HAP-1 (cell line): ENCODE measurements at regions of chr1 and their contacts with region 1.

Region 1: GRCh38 chr1:45569962-45570581 is 13.8 kb upstream of the NASP start:
- DNase-seq: peak; percentile 66 to 74
- H3K4me3 ChIP-seq: no peak overlapping the region
- H3K4me1 ChIP-seq: peaks cover 3% of the 10 kb centered on the region; the same call in 1 of the 2 replicates
- H3K27me3 ChIP-seq: no peaks in the 10 kb centered on the region

Region 2: DNA sequence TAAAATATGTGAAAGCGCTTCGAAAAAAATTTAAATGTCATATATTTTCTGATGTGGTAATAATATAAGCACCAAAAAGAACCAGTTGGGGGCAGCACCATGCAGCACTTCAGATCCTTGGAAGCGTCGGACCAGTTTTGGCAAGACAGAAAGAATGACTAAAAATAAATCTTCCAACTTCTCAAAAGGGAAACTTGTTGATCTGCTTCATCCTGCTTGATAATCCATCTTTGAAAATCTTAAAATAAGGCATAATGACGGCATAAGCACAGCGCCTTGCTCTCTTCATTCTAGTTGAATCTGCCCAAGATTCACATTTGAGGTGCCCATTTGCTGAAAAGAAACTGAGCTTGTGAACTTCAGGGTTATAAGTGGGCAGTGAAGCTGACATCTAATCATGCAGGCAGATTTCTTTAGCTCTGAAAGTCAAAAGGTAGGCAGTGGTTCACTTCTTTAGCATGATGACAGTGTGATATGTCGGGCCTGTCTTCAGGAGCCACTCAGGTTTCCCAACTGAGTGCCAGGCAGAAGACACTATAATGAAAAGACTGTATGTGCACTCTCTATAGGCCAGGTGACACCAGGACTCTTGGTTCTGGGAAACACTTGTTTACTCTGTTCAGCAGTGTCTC is 210.1 kb before region 1 on chr1:
- in situ Hi-C with region 1: loop called (anchors 10 kb)
- DNase-seq: peak; percentile 65 to 72
- H3K4me3 ChIP-seq: no peak overlapping the region
- H3K4me1 ChIP-seq: peaks cover 17% of the 10 kb centered on the region
- H3K27me3 ChIP-seq: no peaks in the 10 kb centered on the region

Region 3: GRCh38 chr1:45508295-45509151 is 61.5 kb before region 1 on chr1:
- in situ Hi-C with region 1: loop called (anchors 5 kb)
- DNase-seq: no peak
- H3K4me3 ChIP-seq: no peak overlapping the region
- H3K4me1 ChIP-seq: no peaks in the 10 kb centered on the region
- H3K27me3 ChIP-seq: no peaks in the 10 kb centered on the region

Region 4: DNA sequence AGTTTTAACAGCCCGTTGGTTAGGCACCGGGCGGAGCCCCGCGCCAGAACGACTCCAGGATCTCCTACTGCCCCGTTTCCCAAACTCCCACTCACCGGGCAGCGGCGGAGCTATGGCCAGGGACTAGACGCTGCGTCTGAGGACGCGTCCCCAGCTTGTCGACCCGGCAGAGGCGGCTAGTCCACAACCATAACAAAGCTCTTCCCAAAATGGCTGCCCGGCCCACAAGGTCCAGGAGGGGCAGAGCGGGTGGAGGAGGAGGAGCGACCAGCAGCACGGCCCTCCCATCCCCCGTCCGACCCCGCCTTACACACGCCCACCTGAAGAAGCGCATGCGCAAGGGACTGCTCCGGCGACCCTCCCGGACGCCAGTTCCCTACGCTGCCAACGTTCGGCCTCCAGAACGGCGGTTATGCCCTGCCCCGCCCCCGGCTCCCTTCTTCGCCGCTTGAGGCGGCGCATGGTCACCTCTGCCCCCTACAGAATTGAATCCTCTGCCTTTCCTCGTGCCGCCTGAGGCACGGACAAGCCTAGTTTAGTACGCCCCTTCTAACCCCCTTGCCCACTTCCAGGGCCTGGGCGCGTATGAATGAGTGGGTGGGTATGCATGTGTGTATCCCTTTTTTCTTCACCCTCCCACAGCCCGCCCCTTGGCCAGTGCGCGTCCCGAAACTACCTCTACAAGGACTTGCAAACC is 116.4 kb after region 1 on chr1 and contains the start of gene GPBP1L1:
- in situ Hi-C with region 1: no loop called
- DNase-seq: peak; percentile 97 to 98
- H3K4me3 ChIP-seq: peak within 1 kb of the TSS; percentile 97
- H3K4me1 ChIP-seq: peaks cover 22% of the 10 kb centered on the region
- H3K27me3 ChIP-seq: no peaks in the 10 kb centered on the region